Left ventricle myocardium superior (tissue), 1 donor: ENCODE measurements at regions of chr7 and their contacts with region 1.

Region 1: GRCh38 chr7:142345811-142346210 is 88.0 kb upstream of the PRSS58 start:
- DNase-seq: no peak
- ATAC-seq: no peak

Region 2: GRCh38 chr7:142308326-142308725 is 37.5 kb before region 1 on chr7:
- intact Hi-C with region 1: loop called (anchors 2 kb)
- DNase-seq: no peak
- ATAC-seq: no peak

Region 3: DNA sequence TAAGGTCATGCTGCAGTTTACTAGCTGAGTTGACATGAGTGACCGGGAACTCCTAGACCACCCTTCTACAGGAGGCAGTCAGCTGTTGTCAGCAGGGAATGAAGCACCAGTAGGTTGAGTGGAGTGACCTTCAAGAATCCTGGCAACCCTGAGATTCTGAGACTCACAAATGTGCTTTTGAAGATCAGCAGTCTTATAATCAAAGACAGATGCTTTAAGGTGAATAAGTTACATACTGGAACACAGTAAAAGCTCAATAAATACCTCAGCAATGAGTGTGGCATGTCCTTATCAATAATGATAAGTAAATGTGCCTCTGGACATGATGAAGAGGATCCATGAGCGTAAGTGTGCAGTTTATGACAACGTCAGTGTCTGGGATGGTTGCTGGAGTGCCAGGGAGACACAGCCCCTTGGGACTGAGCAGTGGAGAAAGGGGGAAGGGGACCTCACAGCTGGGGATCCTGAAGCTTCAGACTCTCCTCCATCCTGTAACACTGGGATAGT is 694.5 kb after region 1 on chr7:
- intact Hi-C with region 1: no loop called
- DNase-seq: no peak
- ATAC-seq: no peak